Body of pancreas (tissue), 4 donors: ENCODE measurements at regions of chr5 and their contacts with region 1.

Region 1: GRCh38 chr5:39714036-39714698 is 289.4 kb upstream of the DAB2 start:
- DNase-seq: peak; percentile 70 to 81 (median 72)
- ATAC-seq: peak; percentile 81
- H3K4me3 ChIP-seq: no peak overlapping the region
- H3K27ac ChIP-seq: peak overlapping the region in 1 of 4 donors; percentile 27
- H3K4me1 ChIP-seq: peaks cover 16% of the 10 kb centered on the region
- H3K27me3 ChIP-seq: no peaks in the 10 kb centered on the region
- CTCF ChIP-seq: peak; percentile 51 to 84 (median 76)
- POLR2A ChIP-seq: no peak

Region 2: DNA sequence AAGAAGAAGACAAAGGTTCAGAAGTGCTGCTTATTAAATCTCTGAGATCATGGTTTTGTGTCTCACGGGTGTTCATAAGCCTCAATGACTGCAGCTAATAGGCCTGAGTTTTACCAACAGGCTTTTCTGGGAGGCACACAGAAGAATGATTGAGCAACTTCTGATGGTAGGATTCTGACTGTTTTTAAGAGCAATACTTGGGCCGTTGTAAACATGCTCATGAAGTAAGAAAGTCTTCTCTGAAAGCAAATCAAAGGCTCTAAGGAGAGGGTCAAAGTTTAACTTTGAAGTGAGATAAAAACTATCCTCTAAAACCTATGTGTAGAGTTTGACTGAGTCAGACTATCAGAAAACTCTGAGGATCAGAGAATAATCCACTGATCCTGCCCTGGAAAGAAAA is 101.5 kb after region 1 on chr5:
- intact Hi-C with region 1: no loop called
- DNase-seq: no peak
- ATAC-seq: no peak
- H3K4me3 ChIP-seq: no peak overlapping the region
- H3K27ac ChIP-seq: no peak overlapping the region
- H3K4me1 ChIP-seq: peaks cover 6% of the 10 kb centered on the region
- H3K27me3 ChIP-seq: no peaks in the 10 kb centered on the region
- CTCF ChIP-seq: no peak
- POLR2A ChIP-seq: no peak

Region 3: DNA sequence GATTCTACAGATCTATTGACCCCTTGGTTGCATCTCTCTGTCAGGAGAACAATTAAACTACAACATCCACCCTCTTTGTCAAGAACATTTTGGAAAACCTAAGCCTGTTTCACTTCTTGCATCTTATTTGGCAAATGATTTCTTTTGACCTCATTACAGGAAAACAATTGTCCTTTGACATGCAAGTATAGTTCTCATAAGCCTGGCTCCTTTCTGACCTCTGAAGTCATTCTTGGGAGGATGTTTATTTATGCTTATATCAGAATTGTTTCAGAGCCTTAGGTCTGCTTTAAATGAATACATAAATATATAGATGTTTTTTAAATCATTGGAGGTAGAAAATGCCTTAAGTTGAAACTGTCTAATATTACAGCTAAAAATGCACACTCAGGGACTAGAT is 604.2 kb after region 1 on chr5:
- intact Hi-C with region 1: no loop called
- DNase-seq: no peak
- ATAC-seq: no peak
- H3K4me3 ChIP-seq: no peak overlapping the region
- H3K27ac ChIP-seq: no peak overlapping the region
- H3K4me1 ChIP-seq: no peaks in the 10 kb centered on the region
- H3K27me3 ChIP-seq: no peaks in the 10 kb centered on the region
- CTCF ChIP-seq: no peak
- POLR2A ChIP-seq: no peak

Region 4: GRCh38 chr5:40347981-40348725 is 634.0 kb after region 1 on chr5:
- intact Hi-C with region 1: no loop called
- DNase-seq: no peak
- ATAC-seq: no peak
- H3K4me3 ChIP-seq: no peak overlapping the region
- H3K27ac ChIP-seq: no peak overlapping the region
- H3K4me1 ChIP-seq: no peaks in the 10 kb centered on the region
- H3K27me3 ChIP-seq: no peaks in the 10 kb centered on the region
- CTCF ChIP-seq: no peak
- POLR2A ChIP-seq: no peak

Region 5: GRCh38 chr5:40679914-40680681 is 965.9 kb after region 1 on chr5 and contains the start of gene PTGER4:
- intact Hi-C with region 1: loop called (anchors 5 kb)
- DNase-seq: peak; percentile 33 to 42 (median 38)
- ATAC-seq: peak; percentile 25
- H3K4me3 ChIP-seq: peak within 1 kb of the TSS; percentile 24 to 95
- H3K27ac ChIP-seq: peak within 1 kb of the TSS; percentile 85 to 95 (median 92)
- H3K4me1 ChIP-seq: peaks cover 13% of the 10 kb centered on the region
- H3K27me3 ChIP-seq: no peaks in the 10 kb centered on the region
- CTCF ChIP-seq: peak in 1 of 7 experiments; percentile 14
- POLR2A ChIP-seq: peak; percentile 97 to 99 (median 98)
- total RNA-seq, gene PTGER4: 25.9 to 38.9 TPM